ENCODE measurements at regions of chr9 and their contacts with region 1.

Region 1: GRCh38 chr9:99071313-99072039 is 33.4 kb upstream of the TGFBR1 start:
- DNase-seq: peak in 1 of 2 donors; percentile 32
- ATAC-seq: peak; percentile 11 to 74 (median 62)
- H3K4me3 ChIP-seq: no peak overlapping the region
- H3K27ac ChIP-seq: peak overlapping the region in 8 of 10 donors; percentile 3 to 75 (median 68)
- H3K4me1 ChIP-seq: peaks cover 0 to 65% (median 38%) of the 10 kb centered on the region in 9 donors
- H3K27me3 ChIP-seq: no peaks in the 10 kb centered on the region
- CTCF ChIP-seq: no peak

Region 2: GRCh38 chr9:98899408-98900056 is 171.9 kb before region 1 on chr9:
- intact Hi-C with region 1: no loop called
- DNase-seq: no peak
- ATAC-seq: no peak
- H3K4me3 ChIP-seq: no peak overlapping the region
- H3K27ac ChIP-seq: no peak overlapping the region
- H3K4me1 ChIP-seq: peaks cover 0 to 44% (median 25%) of the 10 kb centered on the region in 9 donors
- H3K27me3 ChIP-seq: no peaks in the 10 kb centered on the region
- CTCF ChIP-seq: no peak

Region 3: GRCh38 chr9:99019790-99020331 is 51.6 kb before region 1 on chr9:
- intact Hi-C with region 1: loop called in 1 of 10 experiments (anchors 5 kb)
- DNase-seq: no peak
- ATAC-seq: peak in 5 of 8 donors; percentile 46 to 73 (median 58)
- H3K4me3 ChIP-seq: no peak overlapping the region
- H3K27ac ChIP-seq: peak overlapping the region in 8 of 10 donors; percentile 22 to 75 (median 50)
- H3K4me1 ChIP-seq: peaks cover 0 to 36% (median 13%) of the 10 kb centered on the region in 9 donors
- H3K27me3 ChIP-seq: peaks cover 0 to 8% (median 0%) of the 10 kb centered on the region in 7 donors
- CTCF ChIP-seq: no peak

Region 4: GRCh38 chr9:99030092-99030511 is 41.4 kb before region 1 on chr9:
- intact Hi-C with region 1: no loop called
- DNase-seq: no peak
- ATAC-seq: peak in 2 of 8 donors; percentile 20 to 49
- H3K4me3 ChIP-seq: no peak overlapping the region
- H3K27ac ChIP-seq: peak overlapping the region in 1 of 10 donors; percentile 58
- H3K4me1 ChIP-seq: peaks cover 0 to 10% (median 0%) of the 10 kb centered on the region in 9 donors
- H3K27me3 ChIP-seq: peaks cover 0 to 14% (median 0%) of the 10 kb centered on the region in 7 donors
- CTCF ChIP-seq: no peak

Measured in heart right ventricle (tissue), 16 donors.